ENCODE measurements at regions of chr12 and their contacts with region 1.

Region 1: DNA sequence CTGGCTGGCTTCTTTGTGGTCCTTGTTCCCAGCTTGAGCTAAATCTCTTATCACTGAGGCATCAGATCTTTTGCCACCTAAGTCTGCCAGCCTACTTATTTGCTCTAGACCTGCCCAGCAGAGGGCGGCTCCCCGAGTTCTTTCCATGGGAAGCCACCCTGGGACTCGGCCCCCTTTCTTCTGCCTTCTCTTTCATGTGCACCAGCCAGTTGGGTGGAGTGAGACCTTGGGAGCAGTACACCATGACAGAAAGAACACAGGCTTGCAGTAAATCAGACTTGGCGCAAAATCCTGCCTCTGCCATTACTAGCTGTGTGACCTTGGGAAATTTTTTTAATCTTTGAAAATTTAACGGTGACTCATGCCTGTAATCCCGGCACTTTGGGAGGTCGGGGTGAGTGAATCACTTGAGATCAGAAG is 7.4 kb downstream of the SMAGP start:
- DNase-seq: peak; percentile 63
- ATAC-seq: peak; percentile 96
- H3K4me3 Mint-ChIP-seq: no peak overlapping the region
- H3K27ac Mint-ChIP-seq: no peak overlapping the region; the same call in 1 of the 2 replicates
- H3K4me1 Mint-ChIP-seq: peaks cover 11% of the 10 kb centered on the region
- H3K27me3 Mint-ChIP-seq: no peaks in the 10 kb centered on the region
- CTCF ChIP-seq: no peak

Region 2: DNA sequence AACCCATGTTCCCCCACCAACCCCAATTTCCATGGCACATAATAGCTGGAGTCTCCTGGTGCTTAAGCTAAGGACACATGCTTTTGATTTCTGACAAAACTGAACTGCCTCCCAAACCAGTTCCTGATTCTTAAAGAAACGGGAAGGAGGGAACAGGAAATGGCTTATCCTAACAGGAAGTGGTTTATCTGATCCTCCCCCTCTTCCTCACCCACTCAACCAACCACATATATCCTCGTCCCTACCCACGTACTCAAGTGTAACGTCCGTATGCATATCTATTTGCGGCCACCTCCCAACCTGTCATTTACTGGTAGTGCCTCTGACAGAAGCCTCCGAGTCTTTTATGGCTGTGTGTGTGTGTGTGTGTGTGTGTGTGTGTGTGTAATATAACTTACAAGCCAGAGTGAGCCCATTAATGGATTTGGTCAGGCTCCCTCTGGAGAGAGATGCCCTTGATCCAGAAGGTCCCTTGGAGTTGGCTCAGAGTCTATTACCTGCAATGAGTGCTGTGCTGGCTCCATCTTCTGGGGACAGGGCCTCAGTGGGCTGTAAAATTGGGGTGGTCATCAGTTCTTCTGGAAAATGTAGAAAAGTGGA is 16.4 kb before region 1 on chr12:
- CTCF ChIA-PET with region 1: interaction called, 11 read pairs
- POLR2A ChIA-PET with region 1: no interaction called
- DNase-seq: no peak
- ATAC-seq: no peak
- H3K4me3 Mint-ChIP-seq: 0 out of 2 replicates have a peak overlapping the region, but pooled peaks have one; percentile 18
- H3K27ac Mint-ChIP-seq: peak overlapping the region; percentile 72
- H3K4me1 Mint-ChIP-seq: peaks cover 36% of the 10 kb centered on the region
- H3K27me3 Mint-ChIP-seq: no peaks in the 10 kb centered on the region
- CTCF ChIP-seq: no peak